RWPE1 (cell line): ENCODE measurements at regions of chr20 and their contacts with region 1.

Region 1: DNA sequence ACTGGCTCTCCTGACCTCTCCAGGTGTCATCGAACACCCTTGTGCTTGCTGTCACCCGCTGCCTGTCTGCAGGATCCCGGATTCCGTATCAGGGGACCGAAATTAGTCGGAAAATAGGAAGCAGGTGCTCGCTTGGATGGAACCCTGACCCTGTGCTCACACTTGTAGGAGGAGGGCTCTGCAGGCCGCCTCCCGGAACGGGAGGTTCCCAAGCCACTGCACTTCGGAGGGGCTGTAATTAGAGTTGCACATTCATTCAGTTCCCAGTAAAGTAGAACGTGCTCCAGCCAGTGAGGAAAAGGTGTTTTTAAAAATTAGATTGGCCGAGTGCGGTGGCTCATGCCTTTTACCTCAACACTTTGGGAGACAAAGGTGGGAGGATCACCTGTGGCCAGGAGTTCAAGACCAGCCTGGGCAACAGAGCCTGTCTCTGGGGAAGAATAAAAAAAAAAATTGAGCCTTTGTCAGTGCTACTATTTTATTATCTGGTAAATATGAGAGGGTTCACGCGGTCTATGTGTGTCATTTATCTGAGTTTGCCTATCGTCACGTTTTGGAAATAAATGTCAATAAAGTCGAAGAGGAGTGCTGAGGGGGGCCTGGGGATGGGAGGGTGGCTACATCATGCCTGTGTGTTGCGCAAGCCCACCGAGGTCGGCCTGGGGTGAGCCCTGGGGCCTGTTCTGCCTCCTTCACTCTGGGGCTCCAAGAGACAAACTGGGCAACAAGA is 1.5 kb upstream of the GMEB2 start:
- DNase-seq: peak; percentile 90
- H3K27ac ChIP-seq: peak overlapping the region; percentile 97
- CTCF ChIP-seq: no peak

Region 2: GRCh38 chr20:63381807-63382322 is 246.5 kb before region 1 on chr20:
- CTCF ChIA-PET with region 1: no interaction called
- POLR2A ChIA-PET with region 1: no interaction called
- DNase-seq: peak; percentile 68
- H3K27ac ChIP-seq: no peak overlapping the region
- CTCF ChIP-seq: peak; percentile 97

Region 3: DNA sequence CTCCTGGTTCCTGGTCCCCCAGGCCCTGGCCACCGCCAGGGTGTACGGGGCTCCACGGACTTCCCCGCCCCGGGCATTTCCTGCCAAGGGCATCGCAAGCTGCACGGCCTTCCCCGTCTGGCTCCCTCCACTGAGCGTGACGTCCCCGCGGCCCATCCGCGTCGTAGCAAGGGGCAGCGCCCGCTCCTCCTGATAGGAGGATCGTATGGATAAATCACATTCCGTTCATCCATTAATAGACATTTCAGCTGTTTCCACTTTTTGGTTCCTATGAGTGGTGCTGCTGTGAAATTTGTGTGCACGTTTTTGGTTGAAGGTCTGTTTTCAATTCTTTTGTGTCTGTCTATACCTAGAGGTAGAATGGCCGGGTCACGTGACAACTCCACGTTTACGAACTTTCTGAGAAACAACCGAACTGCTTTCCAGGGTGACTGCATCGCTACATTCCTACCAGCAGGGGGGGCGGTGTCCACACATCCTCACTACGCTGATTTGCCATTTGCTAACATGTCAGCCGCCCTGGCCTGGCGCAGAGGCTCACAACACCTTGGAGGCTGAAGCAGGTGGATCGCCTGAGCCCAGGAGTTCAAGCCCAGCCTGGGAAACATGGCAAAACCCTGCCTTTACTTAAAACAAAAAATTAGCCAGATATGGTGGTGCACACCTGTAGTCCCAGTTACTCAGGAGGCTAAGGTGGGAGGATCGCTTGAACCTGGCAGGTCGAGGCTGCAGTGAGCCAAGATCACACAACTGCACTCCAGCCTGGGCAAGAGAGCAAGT is 193.6 kb before region 1 on chr20:
- CTCF ChIA-PET with region 1: no interaction called
- POLR2A ChIA-PET with region 1: no interaction called
- DNase-seq: peak; percentile 89
- H3K27ac ChIP-seq: no peak overlapping the region
- CTCF ChIP-seq: peak; percentile 87

Region 4: DNA sequence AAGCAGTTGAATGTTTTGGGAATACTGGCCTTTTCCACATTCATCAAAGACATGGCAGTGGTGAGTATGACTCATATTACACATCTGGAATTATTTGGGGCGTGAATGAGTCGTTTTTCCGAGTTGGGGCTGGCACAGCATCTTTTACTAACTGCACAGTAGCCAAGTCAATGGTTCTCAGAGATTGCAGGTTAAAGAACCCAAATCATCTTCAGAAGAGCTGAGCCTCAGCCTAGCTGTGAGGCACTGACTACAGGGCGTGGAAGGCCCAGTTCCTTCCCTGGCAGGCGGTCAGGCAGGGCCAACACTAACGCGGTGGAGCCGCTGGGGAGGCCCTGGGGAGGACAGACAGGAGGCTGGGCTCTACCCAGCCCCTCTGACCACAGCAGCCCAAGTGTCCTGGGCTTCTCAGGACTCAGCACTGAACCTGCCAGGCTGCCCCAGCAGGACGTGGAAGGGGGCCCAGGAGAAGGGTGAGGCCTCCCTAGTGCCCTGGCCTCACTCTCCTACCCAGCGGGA is 34.3 kb before region 1 on chr20:
- CTCF ChIA-PET with region 1: no interaction called
- POLR2A ChIA-PET with region 1: no interaction called
- DNase-seq: no peak
- H3K27ac ChIP-seq: peak overlapping the region; percentile 58
- CTCF ChIP-seq: no peak

Region 5: GRCh38 chr20:63652168-63653077 is 24.0 kb after region 1 on chr20:
- CTCF ChIA-PET with region 1: no interaction called
- POLR2A ChIA-PET with region 1: interaction called, 10 read pairs
- DNase-seq: no peak
- H3K27ac ChIP-seq: peak overlapping the region; percentile 89
- CTCF ChIP-seq: no peak; the same call in 1 of the 2 replicates